Naive thymus-derived CD4-positive, alpha-beta T cell (primary cell): ENCODE measurements at regions of chr1 and their contacts with region 1.

Region 1: GRCh38 chr1:156689035-156689952 is 12.1 kb upstream of the NES start:
- DNase-seq: peak; percentile 54 to 78 (median 71)
- ATAC-seq: peak; percentile 98
- H3K4me3 ChIP-seq: no peak overlapping the region
- H3K4me3 Mint-ChIP-seq: peak overlapping the region in 5 of 10 donors; percentile 48 to 78 (median 60)
- H3K27ac ChIP-seq: no peak overlapping the region
- H3K27ac Mint-ChIP-seq: peak overlapping the region in 3 of 9 donors; percentile 1 to 74 (median 60)
- H3K4me1 ChIP-seq: peaks cover 5 to 20% of the 10 kb centered on the region in 2 donors
- H3K4me1 Mint-ChIP-seq: peaks cover 20 to 35% (median 30%) of the 10 kb centered on the region in 7 donors
- H3K27me3 ChIP-seq: peaks cover 0 to 5% of the 10 kb centered on the region in 2 donors
- H3K27me3 Mint-ChIP-seq: peaks cover 38 to 62% (median 44%) of the 10 kb centered on the region in 5 donors

Region 2: GRCh38 chr1:156705918-156706656 is 16.8 kb after region 1 on chr1:
- CTCF ChIA-PET with region 1: interaction called, 93 read pairs
- POLR2A ChIA-PET with region 1: interaction called, 13 read pairs
- intact Hi-C with region 1: loop called (anchors 1 kb)
- DNase-seq: peak; percentile 59 to 79 (median 68)
- ATAC-seq: peak; percentile 82
- H3K4me3 ChIP-seq: peak overlapping the region; percentile 81
- H3K4me3 Mint-ChIP-seq: peak overlapping the region; percentile 88 to 95 (median 92)
- H3K27ac ChIP-seq: peak overlapping the region; percentile 71
- H3K27ac Mint-ChIP-seq: peak overlapping the region; percentile 46 to 94 (median 92)
- H3K4me1 ChIP-seq: peaks cover 23 to 27% of the 10 kb centered on the region in 2 donors
- H3K4me1 Mint-ChIP-seq: peaks cover 11 to 37% (median 21%) of the 10 kb centered on the region in 7 donors
- H3K27me3 ChIP-seq: peaks cover 3 to 4% of the 10 kb centered on the region in 2 donors
- H3K27me3 Mint-ChIP-seq: peaks cover 8 to 44% (median 24%) of the 10 kb centered on the region in 5 donors

Region 3: GRCh38 chr1:156721535-156721934 is 32.2 kb after region 1 on chr1:
- CTCF ChIA-PET with region 1: interaction called, 234 read pairs
- POLR2A ChIA-PET with region 1: interaction called, 53 read pairs
- intact Hi-C with region 1: loop called (anchors 1 kb)
- DNase-seq: no peak
- ATAC-seq: no peak
- H3K4me3 ChIP-seq: no peak overlapping the region
- H3K4me3 Mint-ChIP-seq: peak overlapping the region in 1 of 10 donors; percentile 9
- H3K27ac ChIP-seq: no peak overlapping the region
- H3K27ac Mint-ChIP-seq: peak overlapping the region in 1 of 9 donors; percentile 46
- H3K4me1 ChIP-seq: peaks cover 21 to 23% of the 10 kb centered on the region in 2 donors
- H3K4me1 Mint-ChIP-seq: peaks cover 9 to 26% (median 14%) of the 10 kb centered on the region in 7 donors
- H3K27me3 ChIP-seq: no peaks in the 10 kb centered on the region
- H3K27me3 Mint-ChIP-seq: no peaks in the 10 kb centered on the region

Region 4: DNA sequence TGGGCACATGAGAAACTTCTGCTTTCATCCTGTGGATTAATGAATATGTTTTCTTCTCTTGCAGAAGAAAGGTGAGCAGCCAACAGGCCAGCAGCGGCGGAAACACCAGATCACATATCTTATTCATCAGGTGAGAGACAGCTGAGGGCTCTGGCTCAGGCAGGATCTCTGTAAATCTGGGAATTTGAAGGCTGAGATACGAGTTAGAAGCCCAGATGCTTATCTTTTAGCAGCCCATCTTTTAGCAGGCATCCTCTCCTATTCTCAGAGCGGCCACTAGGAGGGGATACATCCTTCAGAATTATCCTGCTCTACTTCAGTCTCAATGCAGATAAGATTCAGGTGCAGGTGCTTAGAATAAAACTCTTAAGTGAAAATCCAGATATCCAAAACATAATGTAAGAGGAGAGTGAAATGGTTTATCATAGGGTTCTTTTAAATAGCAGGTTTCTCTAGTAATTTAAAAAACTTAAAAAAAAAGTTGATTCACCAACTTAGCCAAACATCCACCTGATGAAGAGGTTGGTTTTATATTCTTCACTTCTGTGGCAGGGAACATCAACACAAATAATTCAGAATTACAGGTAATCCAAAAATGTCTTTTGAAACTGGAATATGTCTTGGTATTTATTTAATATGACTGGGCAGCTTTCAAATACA is 108.0 kb after region 1 on chr1:
- CTCF ChIA-PET with region 1: interaction called, 5 read pairs
- POLR2A ChIA-PET with region 1: no interaction called
- intact Hi-C with region 1: loop called in 1 of 2 experiments (anchors 5 kb)
- DNase-seq: peak in 8 of 9 donors; percentile 47 to 76 (median 66)
- ATAC-seq: peak; percentile 89
- H3K4me3 ChIP-seq: no peak overlapping the region
- H3K4me3 Mint-ChIP-seq: no peak overlapping the region
- H3K27ac ChIP-seq: no peak overlapping the region
- H3K27ac Mint-ChIP-seq: peak overlapping the region in 5 of 9 donors; percentile 0 to 49 (median 18)
- H3K4me1 ChIP-seq: no peaks in the 10 kb centered on the region
- H3K4me1 Mint-ChIP-seq: peaks cover 0 to 24% (median 8%) of the 10 kb centered on the region in 7 donors
- H3K27me3 ChIP-seq: no peaks in the 10 kb centered on the region
- H3K27me3 Mint-ChIP-seq: no peaks in the 10 kb centered on the region

Region 5: DNA sequence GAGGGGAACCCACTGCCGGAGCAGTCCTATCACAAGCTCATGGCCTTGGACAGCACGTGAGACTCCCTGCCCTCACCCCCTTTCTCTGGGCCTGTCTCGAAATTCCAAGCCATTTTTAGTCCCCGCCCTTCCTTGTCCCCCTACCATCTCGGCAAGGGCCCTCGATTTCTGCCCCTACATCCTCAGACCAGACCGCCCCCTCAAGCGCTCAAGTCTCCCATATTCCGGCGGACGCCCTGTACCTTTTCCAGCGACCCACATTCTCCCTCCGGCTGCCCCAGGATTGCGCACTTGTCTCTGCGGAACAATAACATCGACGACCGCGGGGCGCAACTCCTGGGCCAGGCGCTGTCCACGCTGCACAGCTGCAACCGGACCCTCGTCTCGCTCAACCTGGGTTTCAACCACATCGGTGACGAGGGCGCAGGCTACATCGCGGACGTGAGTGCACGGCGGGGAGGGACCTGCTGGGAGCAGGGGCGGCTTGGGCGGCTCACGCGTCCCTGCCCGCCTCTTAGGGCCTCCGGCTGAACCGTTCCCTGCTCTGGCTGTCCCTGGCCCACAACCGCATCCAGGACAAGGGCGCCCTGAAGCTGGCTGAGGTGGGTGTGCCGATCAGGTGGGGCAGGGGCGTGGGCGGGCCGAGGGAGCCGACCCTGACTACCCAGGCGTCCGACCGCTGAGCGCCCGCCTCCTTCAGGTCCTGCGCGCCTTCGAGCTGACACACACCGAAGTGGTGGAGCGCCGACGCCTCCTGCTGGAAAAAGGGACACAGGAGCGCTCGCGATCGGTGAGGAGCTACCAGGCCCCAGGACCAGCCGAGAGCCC is 238.1 kb after region 1 on chr1:
- CTCF ChIA-PET with region 1: no interaction called
- POLR2A ChIA-PET with region 1: no interaction called
- intact Hi-C with region 1: loop called in 1 of 2 experiments (anchors 1 kb)
- DNase-seq: peak; percentile 42 to 72 (median 59)
- ATAC-seq: peak; percentile 76
- H3K4me3 ChIP-seq: no peak overlapping the region
- H3K4me3 Mint-ChIP-seq: peak overlapping the region; percentile 13 to 83 (median 65)
- H3K27ac ChIP-seq: no peak overlapping the region
- H3K27ac Mint-ChIP-seq: peak overlapping the region in 2 of 9 donors; percentile 29 to 59
- H3K4me1 ChIP-seq: peaks cover 0 to 8% of the 10 kb centered on the region in 2 donors
- H3K4me1 Mint-ChIP-seq: peaks cover 18 to 35% (median 31%) of the 10 kb centered on the region in 7 donors
- H3K27me3 ChIP-seq: peaks cover 16 to 27% of the 10 kb centered on the region in 2 donors
- H3K27me3 Mint-ChIP-seq: peaks cover 72 to 91% (median 81%) of the 10 kb centered on the region in 5 donors

Region 6: DNA sequence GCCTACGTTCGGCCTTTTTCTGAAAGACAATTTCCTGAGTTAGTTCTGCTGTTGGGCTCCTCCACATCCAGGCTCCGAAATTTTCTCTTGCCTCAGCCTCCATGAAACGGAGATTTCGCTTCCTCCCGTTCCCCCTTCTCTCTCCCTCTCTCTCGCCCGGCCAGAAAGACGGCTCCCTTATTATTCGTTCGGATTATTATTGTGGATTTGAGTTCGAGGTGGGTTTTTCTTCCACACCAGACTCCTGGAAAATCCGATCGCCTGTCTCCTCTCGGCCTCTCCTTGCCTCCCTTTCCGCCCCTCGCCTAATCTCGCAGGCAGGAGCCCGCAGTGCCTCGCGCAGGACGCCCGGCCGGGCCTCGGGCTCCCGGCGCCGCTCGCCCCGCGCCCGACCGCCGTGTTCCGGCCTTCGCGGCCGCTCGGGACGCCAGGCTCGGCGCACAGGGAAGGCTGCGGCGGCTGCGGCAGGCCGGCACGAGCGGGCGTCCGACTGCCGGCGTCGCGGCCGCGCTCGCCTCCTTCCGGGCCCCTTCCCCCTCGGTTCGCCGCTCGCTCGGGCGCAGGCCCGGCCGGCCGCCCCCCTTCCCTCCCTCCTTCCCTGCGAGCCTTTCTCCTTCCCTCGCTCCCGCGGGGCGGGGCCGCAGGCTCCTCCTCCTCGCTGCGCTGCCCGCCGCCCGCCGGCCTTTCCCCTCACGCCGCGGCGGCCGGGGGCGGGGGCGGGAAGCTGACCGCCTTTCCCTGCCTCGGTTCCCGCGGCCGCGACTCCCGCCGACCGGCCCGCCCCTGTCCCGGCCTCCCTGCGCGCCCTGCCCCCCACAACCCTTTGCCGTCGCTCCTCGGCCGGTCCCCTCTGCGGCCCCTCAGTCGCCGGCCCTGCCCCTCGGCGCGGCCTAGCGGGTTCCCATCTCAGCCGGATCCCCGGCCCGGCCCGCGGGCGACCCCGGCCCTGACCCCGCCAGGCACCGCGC is 356.2 kb after region 1 on chr1 and contains the start of gene ARHGEF11:
- CTCF ChIA-PET with region 1: no interaction called
- POLR2A ChIA-PET with region 1: no interaction called
- intact Hi-C with region 1: no loop called
- DNase-seq: peak in 6 of 9 donors; percentile 7 to 60 (median 10)
- ATAC-seq: peak; percentile 73
- H3K4me3 ChIP-seq: peak within 1 kb of the TSS; percentile 13
- H3K4me3 Mint-ChIP-seq: peak within 1 kb of the TSS; percentile 88 to 99 (median 92)
- H3K27ac ChIP-seq: no peak within 1 kb of the TSS
- H3K27ac Mint-ChIP-seq: peak within 1 kb of the TSS in 3 of 9 donors; percentile 2 to 61 (median 47)
- H3K4me1 ChIP-seq: peaks cover 0 to 4% of the 10 kb centered on the region in 2 donors
- H3K4me1 Mint-ChIP-seq: peaks cover 6 to 20% (median 17%) of the 10 kb centered on the region in 7 donors
- H3K27me3 ChIP-seq: peaks cover 14 to 15% of the 10 kb centered on the region in 2 donors
- H3K27me3 Mint-ChIP-seq: peaks cover 72 to 89% (median 80%) of the 10 kb centered on the region in 5 donors
- total RNA-seq, gene ARHGEF11: 25.8 to 54.9 (median 38.8) TPM